Prostate gland (tissue), 2 donors: ENCODE measurements at regions of chr5 and their contacts with region 1.

Region 1: DNA sequence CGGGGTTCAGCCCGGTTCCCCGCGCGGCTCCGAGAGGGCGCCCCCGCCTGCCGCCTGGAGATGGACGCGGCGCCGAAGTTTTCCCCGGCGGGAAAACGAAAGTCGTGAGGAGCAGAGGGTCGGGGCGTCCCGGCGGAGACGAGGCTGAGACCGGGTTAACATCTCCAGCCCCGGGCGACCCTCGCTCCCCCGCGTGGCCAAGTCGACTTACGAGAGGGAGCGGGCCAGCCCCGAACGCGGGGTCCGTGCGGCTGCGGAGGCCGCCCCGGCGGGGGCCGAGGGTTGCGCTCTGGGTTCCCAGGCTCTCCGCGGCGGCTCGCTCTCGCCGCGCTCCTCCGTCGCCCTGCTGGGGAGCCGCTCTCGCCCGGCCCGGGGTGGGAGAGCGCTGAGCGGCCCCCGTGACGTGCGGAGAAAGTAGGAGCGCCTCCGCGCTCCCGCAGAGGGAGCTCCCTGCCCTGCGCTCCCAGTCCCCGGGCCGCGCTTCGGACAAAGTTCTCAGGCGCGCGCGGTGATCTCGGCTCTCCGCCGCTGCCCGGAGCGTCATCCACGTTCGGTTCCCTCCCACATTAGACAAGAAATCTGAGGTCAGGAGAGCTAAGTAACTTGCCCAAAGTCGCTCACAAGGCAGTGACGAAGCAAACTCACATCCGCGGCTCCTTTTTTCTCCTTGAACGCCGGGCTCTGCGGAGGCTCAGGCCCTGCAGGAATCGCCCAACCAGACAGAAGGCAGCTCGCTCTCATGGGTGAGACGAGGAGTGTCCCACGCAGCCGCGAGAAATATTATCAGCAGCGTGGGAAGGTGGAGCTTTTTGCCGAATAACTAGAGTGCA is 1.2 kb upstream of the GCNT4 start:
- DNase-seq: peak; percentile 33
- H3K4me3 ChIP-seq: peak overlapping the region; percentile 76 to 82
- H3K27ac ChIP-seq: peak overlapping the region; percentile 86
- H3K4me1 ChIP-seq: peaks cover 3% of the 10 kb centered on the region
- H3K27me3 ChIP-seq: no peaks in the 10 kb centered on the region
- CTCF ChIP-seq: peak in 1 of 4 experiments; percentile 36
- POLR2A ChIP-seq: no peak

Region 2: DNA sequence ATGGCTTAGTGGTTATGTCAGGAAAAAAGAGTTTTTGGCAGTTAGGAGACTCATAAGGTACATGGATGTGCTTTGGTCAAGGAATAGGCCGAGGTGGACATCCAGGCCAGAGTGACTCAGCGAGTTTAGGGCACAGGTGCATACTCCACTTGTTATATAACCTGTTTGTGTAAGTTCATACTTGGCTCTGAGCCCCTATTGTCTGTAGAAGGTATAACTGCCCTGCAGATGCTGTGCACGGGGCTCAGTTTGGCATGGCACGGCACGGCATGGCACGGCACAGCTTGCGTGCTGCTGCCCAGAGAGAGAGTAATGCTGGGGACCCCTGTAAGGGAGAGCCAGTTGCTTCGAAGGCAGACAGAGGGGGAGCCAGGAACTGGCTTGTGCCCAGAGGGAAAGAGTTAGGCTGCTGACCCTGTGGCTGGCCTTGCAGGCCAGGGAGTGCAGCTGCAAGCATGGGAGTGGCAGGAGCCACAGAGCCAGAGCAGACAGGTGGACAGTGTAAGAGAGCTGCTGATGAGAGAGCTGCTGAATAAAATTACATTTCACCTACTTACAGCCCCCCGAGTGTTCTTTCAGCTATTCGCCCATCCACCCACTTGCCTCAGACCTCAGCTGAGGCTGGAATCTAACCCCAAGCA is 33.4 kb before region 1 on chr5:
- intact Hi-C with region 1: no loop called
- DNase-seq: no peak
- H3K4me3 ChIP-seq: no peak overlapping the region
- H3K27ac ChIP-seq: no peak overlapping the region
- H3K4me1 ChIP-seq: no peaks in the 10 kb centered on the region
- H3K27me3 ChIP-seq: no peaks in the 10 kb centered on the region
- CTCF ChIP-seq: no peak
- POLR2A ChIP-seq: no peak

Region 3: GRCh38 chr5:75482482-75482881 is 429.0 kb after region 1 on chr5:
- intact Hi-C with region 1: no loop called
- DNase-seq: no peak
- H3K4me3 ChIP-seq: no peak overlapping the region
- H3K27ac ChIP-seq: no peak overlapping the region
- H3K4me1 ChIP-seq: no peaks in the 10 kb centered on the region
- H3K27me3 ChIP-seq: no peaks in the 10 kb centered on the region
- CTCF ChIP-seq: no peak
- POLR2A ChIP-seq: no peak

Region 4: GRCh38 chr5:75511435-75512384 is 458.2 kb after region 1 on chr5 and contains the starts of genes CERT1 and POLK:
- intact Hi-C with region 1: loop called (anchors 5 kb)
- DNase-seq: peak; percentile 99
- H3K4me3 ChIP-seq: peak within 1 kb of the TSS; percentile 79 to 93
- H3K27ac ChIP-seq: peak within 1 kb of the TSS; percentile 93 to 95
- H3K4me1 ChIP-seq: no peaks in the 10 kb centered on the region
- H3K27me3 ChIP-seq: no peaks in the 10 kb centered on the region
- CTCF ChIP-seq: peak in 1 of 4 experiments; percentile 2
- POLR2A ChIP-seq: peak; percentile 84
- total RNA-seq, gene CERT1: 32.3 to 35.5 TPM
- total RNA-seq, gene POLK: 28.4 to 33.6 TPM